PC-3 (cell line): ENCODE measurements at regions of chr3 and their contacts with region 1.

Region 1: GRCh38 chr3:157429708-157430107 is 6.9 kb upstream of the PTX3 start:
- DNase-seq: peak; percentile 33
- ATAC-seq: peak; percentile 70
- H3K4me3 ChIP-seq: no peak overlapping the region
- H3K27ac ChIP-seq: no peak overlapping the region
- H3K4me1 ChIP-seq: peaks cover 3% of the 10 kb centered on the region
- H3K27me3 ChIP-seq: no peaks in the 10 kb centered on the region
- CTCF ChIP-seq: no peak

Region 2: DNA sequence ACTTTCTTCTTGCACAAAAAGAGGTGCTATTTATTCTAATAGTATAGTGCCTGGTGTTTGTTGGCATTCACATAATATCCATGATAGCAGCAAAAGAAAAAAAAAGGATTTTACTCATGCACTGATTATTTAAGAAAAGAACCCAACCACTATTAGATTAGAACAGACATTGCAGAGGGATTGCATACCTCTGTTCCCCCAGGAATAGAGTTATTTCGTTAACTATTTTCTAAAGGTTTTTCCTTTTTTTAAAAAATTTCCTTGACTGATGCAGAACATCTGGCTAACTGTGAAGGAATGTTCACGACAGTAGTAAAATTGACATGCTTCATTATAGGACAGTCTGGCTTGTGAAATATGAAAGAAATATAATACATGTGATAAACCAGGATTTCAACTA is 129.6 kb before region 1 on chr3:
- CTCF ChIA-PET with region 1: no interaction called
- POLR2A ChIA-PET with region 1: no interaction called
- intact Hi-C with region 1: no loop called
- DNase-seq: no peak
- ATAC-seq: no peak
- H3K4me3 ChIP-seq: no peak overlapping the region
- H3K27ac ChIP-seq: no peak overlapping the region
- H3K4me1 ChIP-seq: no peaks in the 10 kb centered on the region; the same call in 1 of the 2 replicates
- H3K27me3 ChIP-seq: no peaks in the 10 kb centered on the region
- CTCF ChIP-seq: no peak

Region 3: GRCh38 chr3:157388976-157389375 is 40.7 kb before region 1 on chr3:
- CTCF ChIA-PET with region 1: no interaction called
- POLR2A ChIA-PET with region 1: no interaction called
- intact Hi-C with region 1: loop called (anchors 5 kb)
- DNase-seq: peak; percentile 39
- ATAC-seq: peak; percentile 65
- H3K4me3 ChIP-seq: no peak overlapping the region
- H3K27ac ChIP-seq: no peak overlapping the region
- H3K4me1 ChIP-seq: peaks cover 22% of the 10 kb centered on the region
- H3K27me3 ChIP-seq: no peaks in the 10 kb centered on the region
- CTCF ChIP-seq: no peak